ENCODE measurements at regions of chr4 and their contacts with region 1.

Region 1: DNA sequence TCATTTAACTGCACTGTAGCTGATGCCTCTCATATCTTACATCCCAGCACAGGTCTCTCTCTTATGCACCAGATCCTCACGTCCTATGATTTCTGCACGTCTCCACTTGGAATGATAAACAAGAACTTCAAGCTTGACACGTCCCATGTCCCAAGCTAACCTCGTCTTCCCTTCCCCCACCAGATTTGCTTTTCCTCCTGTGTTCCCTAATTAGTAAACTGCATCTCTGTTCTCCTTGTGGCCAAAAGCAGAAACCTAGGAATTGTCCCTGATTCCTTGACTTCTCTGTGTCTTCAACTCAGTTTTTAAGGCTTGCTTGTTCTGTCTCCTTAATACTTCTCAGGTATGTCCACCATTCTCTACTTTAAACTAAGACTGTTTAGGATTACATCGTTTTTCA is 171.9 kb downstream of the BMPR1B start:
- DNase-seq: no peak
- ATAC-seq: peak in 1 of 2 experiments; percentile 16; a peak in 2 of 6 replicates
- H3K4me3 ChIP-seq: no peak overlapping the region
- H3K27ac ChIP-seq: peak overlapping the region in 1 of 2 experiments; percentile 48; a peak in 1 of 6 replicates
- H3K4me1 ChIP-seq: peaks cover 82% of the 10 kb centered on the region
- CTCF ChIP-seq: no peak
- EP300 ChIP-seq: no peak
- POLR2A ChIP-seq: no peak
- RAD21 ChIP-seq: no peak

Region 2: DNA sequence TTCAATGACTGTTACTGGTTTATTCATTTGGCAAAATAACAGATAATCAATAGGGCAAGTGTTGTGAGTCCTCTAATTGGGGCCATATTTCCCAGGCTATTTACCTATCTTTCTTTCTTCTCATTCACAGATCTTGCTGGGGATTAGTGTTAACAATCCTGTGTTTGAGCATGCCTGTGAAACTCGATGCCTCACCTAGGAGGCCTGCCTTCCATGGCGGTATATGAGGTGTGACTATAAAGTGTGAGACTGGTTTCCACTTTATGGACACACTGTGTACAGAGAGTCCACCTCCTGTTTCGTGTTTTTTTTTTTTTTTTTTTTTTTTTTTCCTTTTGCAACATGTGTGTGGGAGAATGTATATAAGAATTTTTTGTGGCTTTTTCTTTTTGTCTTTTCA is 27.3 kb after region 1 on chr4:
- CTCF ChIA-PET with region 1: no interaction called
- POLR2A ChIA-PET with region 1: interaction called, 11 read pairs
- DNase-seq: no peak
- ATAC-seq: no peak
- H3K4me3 ChIP-seq: no peak overlapping the region
- H3K27ac ChIP-seq: no peak overlapping the region
- H3K4me1 ChIP-seq: peaks cover 9% of the 10 kb centered on the region
- CTCF ChIP-seq: no peak
- EP300 ChIP-seq: no peak
- POLR2A ChIP-seq: no peak
- RAD21 ChIP-seq: no peak

Region 3: DNA sequence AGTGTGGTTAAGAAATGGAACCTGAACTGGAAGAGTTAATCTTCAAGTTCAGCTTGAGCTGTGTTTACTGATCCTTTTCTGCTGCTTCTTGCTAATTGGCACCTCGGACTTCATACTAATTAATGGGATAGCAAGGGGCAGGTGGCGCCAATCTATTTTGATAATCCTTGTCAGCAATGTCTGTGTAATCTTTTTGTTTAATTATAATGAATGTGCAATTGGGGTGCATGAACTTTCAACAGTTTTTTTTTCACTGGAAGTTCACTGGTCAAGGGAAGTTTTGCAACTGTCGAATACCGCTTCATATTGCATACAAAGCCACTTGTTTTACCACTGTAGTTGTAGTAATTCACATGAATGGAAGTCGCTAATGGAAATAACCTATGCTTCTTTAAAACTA is 89.1 kb after region 1 on chr4:
- CTCF ChIA-PET with region 1: no interaction called
- POLR2A ChIA-PET with region 1: no interaction called
- DNase-seq: no peak
- ATAC-seq: no peak
- H3K4me3 ChIP-seq: no peak overlapping the region
- H3K27ac ChIP-seq: peak overlapping the region; percentile 53 to 67
- H3K4me1 ChIP-seq: peaks cover 65% of the 10 kb centered on the region
- CTCF ChIP-seq: no peak
- EP300 ChIP-seq: no peak
- POLR2A ChIP-seq: no peak
- RAD21 ChIP-seq: no peak